Prostate gland (tissue), 2 donors: ENCODE measurements at regions of chr3 and their contacts with region 1.

Region 1: DNA sequence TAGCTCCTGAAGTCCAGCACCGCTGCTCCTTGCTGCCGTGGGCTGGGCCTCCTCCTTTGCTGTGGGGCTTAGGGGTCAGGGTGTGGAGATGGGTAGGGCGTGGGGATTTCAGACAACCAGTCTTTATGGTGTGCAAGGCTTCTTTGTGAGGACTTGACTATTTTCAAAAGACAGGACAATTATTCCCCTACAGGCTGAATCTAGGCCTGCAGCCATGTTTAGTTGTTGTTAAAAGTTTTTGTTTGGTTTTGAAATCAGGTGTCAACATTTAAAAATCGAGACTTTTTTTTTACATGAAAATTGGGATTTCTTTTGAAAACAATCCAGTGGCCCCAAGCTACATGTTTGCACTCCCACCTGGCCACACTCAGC is 10.6 kb downstream of the RPL32 start:
- DNase-seq: no peak
- H3K4me3 ChIP-seq: no peak overlapping the region
- H3K27ac ChIP-seq: no peak overlapping the region
- H3K4me1 ChIP-seq: no peaks in the 10 kb centered on the region
- H3K27me3 ChIP-seq: no peaks in the 10 kb centered on the region
- CTCF ChIP-seq: no peak
- POLR2A ChIP-seq: no peak

Region 2: GRCh38 chr3:12706504-12707253 is 124.1 kb before region 1 on chr3:
- intact Hi-C with region 1: loop called (anchors 10 kb)
- DNase-seq: peak; percentile 12
- H3K4me3 ChIP-seq: no peak overlapping the region
- H3K27ac ChIP-seq: no peak overlapping the region
- H3K4me1 ChIP-seq: no peaks in the 10 kb centered on the region
- H3K27me3 ChIP-seq: no peaks in the 10 kb centered on the region
- CTCF ChIP-seq: peak in 3 of 4 experiments; percentile 15 to 64 (median 48)
- POLR2A ChIP-seq: no peak

Region 3: GRCh38 chr3:12719984-12720898 is 110.5 kb before region 1 on chr3:
- intact Hi-C with region 1: no loop called
- DNase-seq: peak; percentile 63
- H3K4me3 ChIP-seq: no peak overlapping the region
- H3K27ac ChIP-seq: no peak overlapping the region
- H3K4me1 ChIP-seq: no peaks in the 10 kb centered on the region
- H3K27me3 ChIP-seq: no peaks in the 10 kb centered on the region
- CTCF ChIP-seq: peak; percentile 61 to 91 (median 86)
- POLR2A ChIP-seq: no peak

Region 4: GRCh38 chr3:13700362-13700761 is 869.6 kb after region 1 on chr3:
- intact Hi-C with region 1: no loop called
- DNase-seq: no peak
- H3K4me3 ChIP-seq: no peak overlapping the region
- H3K27ac ChIP-seq: no peak overlapping the region
- H3K4me1 ChIP-seq: no peaks in the 10 kb centered on the region
- H3K27me3 ChIP-seq: no peaks in the 10 kb centered on the region
- CTCF ChIP-seq: no peak
- POLR2A ChIP-seq: no peak